Ascending aorta (tissue), 2 donors: ENCODE measurements at regions of chr2 and their contacts with region 1.

Region 1: GRCh38 chr2:107313316-107313715 is 427.3 kb upstream of the ST6GAL2 start:
- DNase-seq: no peak
- H3K4me3 ChIP-seq: no peak overlapping the region
- H3K27ac ChIP-seq: no peak overlapping the region
- H3K4me1 ChIP-seq: peaks cover 0 to 6% of the 10 kb centered on the region in 2 donors
- H3K27me3 ChIP-seq: no peaks in the 10 kb centered on the region
- CTCF ChIP-seq: no peak

Region 2: DNA sequence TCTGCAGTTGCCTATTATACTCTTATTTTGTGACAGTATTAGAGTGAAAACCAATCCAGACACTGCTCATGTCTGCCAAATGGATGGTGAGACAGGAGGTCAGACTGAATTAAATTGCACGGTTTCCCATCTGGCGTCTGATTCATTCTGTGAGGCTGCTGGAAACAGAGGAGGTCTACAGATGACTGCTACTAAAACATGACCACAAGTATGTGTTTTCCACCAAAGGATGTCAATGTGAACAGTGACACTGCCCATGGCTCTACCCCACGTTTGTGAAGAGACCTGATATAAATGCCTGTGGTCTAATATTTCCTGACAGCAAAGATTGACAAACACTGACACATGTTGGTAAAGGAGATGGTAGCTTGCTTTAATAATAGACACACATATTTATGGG is 323.0 kb before region 1 on chr2:
- intact Hi-C with region 1: loop called (anchors 10 kb)
- DNase-seq: no peak
- H3K4me3 ChIP-seq: no peak overlapping the region
- H3K27ac ChIP-seq: no peak overlapping the region
- H3K4me1 ChIP-seq: peaks cover 0 to 4% of the 10 kb centered on the region in 2 donors
- H3K27me3 ChIP-seq: no peaks in the 10 kb centered on the region
- CTCF ChIP-seq: no peak